ENCODE measurements at regions of chr11 and their contacts with region 1.

Region 1: DNA sequence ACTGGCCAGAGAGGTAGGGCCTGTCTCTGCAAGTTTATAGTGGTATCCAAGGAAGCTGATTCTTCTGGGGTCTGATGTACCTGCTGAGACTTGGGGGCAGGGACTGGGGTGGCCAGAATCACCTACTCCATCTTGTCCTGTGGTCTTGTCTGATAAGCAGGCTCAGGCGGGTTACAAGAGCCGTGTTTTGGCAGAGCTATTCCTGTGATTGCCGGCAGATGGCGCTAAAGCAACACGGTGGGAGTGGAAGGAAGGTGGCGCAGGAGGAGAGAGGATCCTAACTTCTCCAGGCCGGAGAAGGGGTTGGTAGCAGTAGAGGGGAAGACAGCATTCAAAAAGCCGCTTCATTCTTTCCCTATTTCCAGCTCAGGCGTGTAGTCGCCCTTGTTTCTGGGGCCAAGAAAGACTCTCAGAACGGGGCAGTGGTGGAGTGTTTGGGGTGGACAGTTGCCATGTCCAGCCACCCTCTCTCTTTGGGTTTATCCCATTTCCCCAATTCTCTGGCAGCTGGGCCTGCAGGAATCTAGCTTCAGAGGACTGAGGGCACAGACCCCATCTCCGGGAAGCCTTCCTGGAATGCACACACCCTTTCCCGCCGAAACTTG is 15.1 kb downstream of the CHRM1 start:
- DNase-seq: peak; percentile 69
- H3K4me3 Mint-ChIP-seq: no peak overlapping the region
- H3K27ac Mint-ChIP-seq: no peak overlapping the region
- H3K4me1 Mint-ChIP-seq: peaks cover 21% of the 10 kb centered on the region
- H3K27me3 Mint-ChIP-seq: peaks cover 9% of the 10 kb centered on the region

Region 2: DNA sequence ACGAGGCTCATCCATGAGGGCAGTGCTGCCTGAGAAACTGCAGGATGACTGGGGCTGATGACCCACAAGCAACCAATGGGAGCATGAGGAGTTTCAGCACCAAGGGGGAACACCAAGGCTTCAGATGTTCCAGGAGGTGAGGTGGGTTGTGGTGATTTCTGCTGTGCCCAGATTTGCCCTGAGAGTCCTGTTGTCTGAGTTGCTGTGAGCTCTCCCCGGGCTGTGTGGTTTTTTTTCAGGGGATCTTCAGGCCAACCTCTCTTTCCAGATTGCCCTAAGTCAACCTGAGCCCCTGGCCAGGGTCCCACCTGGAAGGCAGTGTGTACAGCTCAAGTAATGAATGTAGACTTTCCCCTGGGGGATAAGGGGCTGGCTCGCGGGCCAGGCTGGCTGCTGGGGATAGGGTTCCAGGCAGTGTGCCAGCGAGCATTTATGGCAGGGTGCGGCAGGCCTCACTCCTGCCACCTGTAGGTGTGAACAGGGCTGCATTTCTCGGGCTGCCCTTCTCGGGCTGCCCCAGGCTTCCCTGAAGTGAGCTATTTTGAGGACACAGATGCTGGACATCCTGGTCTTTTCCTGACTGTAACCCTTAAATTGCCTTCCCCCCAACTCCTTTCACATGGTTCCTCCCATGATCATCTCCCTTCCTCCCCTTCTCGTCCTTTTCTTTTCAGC is 69.0 kb after region 1 on chr11:
- intact Hi-C with region 1: loop called (anchors 1 kb)
- DNase-seq: no peak
- H3K4me3 Mint-ChIP-seq: no peak overlapping the region
- H3K27ac Mint-ChIP-seq: no peak overlapping the region
- H3K4me1 Mint-ChIP-seq: no peaks in the 10 kb centered on the region
- H3K27me3 Mint-ChIP-seq: peaks cover 4% of the 10 kb centered on the region

Region 3: GRCh38 chr11:63023841-63024648 is 118.0 kb after region 1 on chr11:
- intact Hi-C with region 1: loop called (anchors 1 kb)
- DNase-seq: peak; percentile 66
- H3K4me3 Mint-ChIP-seq: no peak overlapping the region
- H3K27ac Mint-ChIP-seq: no peak overlapping the region
- H3K4me1 Mint-ChIP-seq: peaks cover 6% of the 10 kb centered on the region
- H3K27me3 Mint-ChIP-seq: peaks cover 10% of the 10 kb centered on the region

Region 4: DNA sequence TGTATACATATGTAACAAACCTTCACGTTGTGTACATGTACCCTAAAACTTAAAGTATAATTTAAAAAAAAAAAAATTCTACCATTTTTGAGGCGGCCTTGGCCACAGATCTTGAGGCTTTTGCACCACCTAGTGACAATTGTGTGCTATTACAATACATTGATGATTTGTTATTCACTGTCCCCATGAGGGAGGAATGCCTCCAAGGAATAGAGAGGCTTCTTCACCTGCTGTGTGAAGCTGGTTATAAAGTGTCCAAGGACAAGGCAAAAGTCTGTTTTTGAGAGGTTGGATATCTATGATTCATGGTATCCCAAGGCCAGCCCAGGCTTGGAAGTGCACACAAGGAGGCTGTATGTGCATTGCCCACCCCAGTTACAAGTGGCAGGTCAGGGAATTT is 306.7 kb after region 1 on chr11:
- intact Hi-C with region 1: loop called (anchors 10 kb)
- DNase-seq: no peak
- H3K4me3 Mint-ChIP-seq: no peak overlapping the region
- H3K27ac Mint-ChIP-seq: no peak overlapping the region
- H3K4me1 Mint-ChIP-seq: no peaks in the 10 kb centered on the region
- H3K27me3 Mint-ChIP-seq: no peaks in the 10 kb centered on the region